ENCODE measurements at regions of chr17 and their contacts with region 1.

Region 1: DNA sequence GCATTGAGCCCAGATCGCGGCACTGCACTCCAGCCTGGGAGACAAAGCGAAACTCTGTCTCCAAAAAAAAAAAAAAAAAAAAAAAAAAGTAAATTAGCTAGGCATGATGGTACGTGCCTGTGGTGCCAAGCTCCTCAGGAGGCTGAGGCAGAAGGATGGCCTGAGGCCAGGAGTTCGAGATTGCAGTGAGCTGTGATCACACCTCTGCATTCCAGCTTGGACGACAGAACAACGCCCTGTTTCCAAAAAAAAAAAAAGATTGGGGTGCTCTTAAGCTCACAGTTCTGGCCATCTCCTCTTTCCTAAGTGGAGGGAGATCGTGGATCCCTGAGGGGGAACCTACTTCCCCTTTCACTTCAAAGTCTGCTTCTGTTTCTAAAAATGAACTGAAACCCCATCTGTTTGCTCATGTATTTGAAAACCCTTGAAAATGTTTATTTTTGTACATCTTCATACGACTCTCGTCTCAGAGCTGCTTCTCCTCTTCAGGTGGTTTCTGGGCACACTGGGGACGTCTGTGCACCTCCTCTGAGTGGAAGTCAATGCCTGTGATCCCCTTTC is 138.8 kb downstream of the PRKCA start:
- DNase-seq: peak in 3 of 10 donors; percentile 20 to 46 (median 36)
- H3K4me3 ChIP-seq: peak overlapping the region in 55 of 59 donors; percentile 11 to 61 (median 34)
- H3K27ac ChIP-seq: peak overlapping the region in 44 of 59 donors; percentile 1 to 71 (median 52)
- H3K27me3 ChIP-seq: no peaks in the 10 kb centered on the region
- CTCF ChIP-seq: peak in 2 of 56 donors; percentile 9 to 14

Region 2: GRCh38 chr17:66165513-66166123 is 275.6 kb before region 1 on chr17:
- intact Hi-C with region 1: no loop called
- DNase-seq: no peak
- H3K4me3 ChIP-seq: no peak overlapping the region
- H3K27ac ChIP-seq: no peak overlapping the region
- H3K27me3 ChIP-seq: no peaks in the 10 kb centered on the region
- CTCF ChIP-seq: peak; percentile 59 to 93 (median 81)

Region 3: GRCh38 chr17:66474258-66474657 is 33.1 kb after region 1 on chr17:
- intact Hi-C with region 1: no loop called
- DNase-seq: no peak
- H3K4me3 ChIP-seq: no peak overlapping the region
- H3K27ac ChIP-seq: peak overlapping the region in 1 of 59 donors; percentile 13
- H3K27me3 ChIP-seq: no peaks in the 10 kb centered on the region
- CTCF ChIP-seq: no peak

Region 4: GRCh38 chr17:66625311-66625775 is 184.2 kb after region 1 on chr17:
- intact Hi-C with region 1: loop called in 1 of 2 experiments (anchors 10 kb)
- DNase-seq: no peak
- H3K4me3 ChIP-seq: no peak overlapping the region
- H3K27ac ChIP-seq: no peak overlapping the region
- H3K27me3 ChIP-seq: no peaks in the 10 kb centered on the region
- CTCF ChIP-seq: peak; percentile 19 to 79 (median 66)

Measured in dorsolateral prefrontal cortex (tissue), 120 donors.